ENCODE measurements at regions of chr9 and their contacts with region 1.

Region 1: GRCh38 chr9:25602400-25603046 is 75.7 kb downstream of the TUSC1 start:
- DNase-seq: no peak
- ATAC-seq: no peak
- H3K4me3 ChIP-seq: no peak overlapping the region
- H3K27ac ChIP-seq: no peak overlapping the region
- H3K4me1 ChIP-seq: no peaks in the 10 kb centered on the region
- H3K27me3 ChIP-seq: no peaks in the 10 kb centered on the region
- CTCF ChIP-seq: no peak

Region 2: DNA sequence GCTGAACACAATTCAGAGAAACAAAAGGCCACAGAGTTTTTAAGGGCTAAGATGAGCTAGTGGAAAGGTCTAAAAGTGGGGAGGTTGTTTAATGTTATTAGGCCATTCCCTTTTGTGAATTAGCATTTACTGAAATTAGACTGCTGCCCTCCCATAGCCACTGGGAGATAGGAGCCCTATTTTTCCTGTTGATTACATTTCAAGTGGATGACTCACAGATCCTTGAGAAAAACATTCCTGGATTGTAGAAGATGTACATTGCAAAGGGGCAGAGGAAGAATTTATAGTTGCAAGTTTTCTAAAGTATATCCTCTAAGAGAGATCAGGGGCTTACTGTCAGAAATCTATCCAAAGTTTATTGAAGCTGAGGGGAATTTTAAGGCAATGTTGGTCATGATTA is 689.8 kb before region 1 on chr9:
- intact Hi-C with region 1: loop called in 1 of 10 experiments (anchors 10 kb)
- DNase-seq: no peak
- ATAC-seq: no peak
- H3K4me3 ChIP-seq: no peak overlapping the region
- H3K27ac ChIP-seq: no peak overlapping the region
- H3K4me1 ChIP-seq: no peaks in the 10 kb centered on the region
- H3K27me3 ChIP-seq: no peaks in the 10 kb centered on the region
- CTCF ChIP-seq: no peak

Region 3: GRCh38 chr9:25570802-25571201 is 31.7 kb before region 1 on chr9:
- intact Hi-C with region 1: no loop called
- DNase-seq: no peak
- ATAC-seq: no peak
- H3K4me3 ChIP-seq: no peak overlapping the region
- H3K27ac ChIP-seq: no peak overlapping the region
- H3K4me1 ChIP-seq: no peaks in the 10 kb centered on the region
- H3K27me3 ChIP-seq: no peaks in the 10 kb centered on the region
- CTCF ChIP-seq: no peak